ENCODE measurements at regions of chr5 and their contacts with region 1.

Region 1: GRCh38 chr5:134527146-134527960 is 1.9 kb downstream of the JADE2 start:
- DNase-seq: peak; percentile 73
- ATAC-seq: peak; percentile 49
- H3K4me3 Mint-ChIP-seq: peak overlapping the region; percentile 98
- H3K27ac Mint-ChIP-seq: peak overlapping the region; percentile 85
- H3K4me1 Mint-ChIP-seq: peaks cover 58% of the 10 kb centered on the region
- H3K27me3 Mint-ChIP-seq: no peaks in the 10 kb centered on the region
- CTCF ChIP-seq: no peak

Region 2: DNA sequence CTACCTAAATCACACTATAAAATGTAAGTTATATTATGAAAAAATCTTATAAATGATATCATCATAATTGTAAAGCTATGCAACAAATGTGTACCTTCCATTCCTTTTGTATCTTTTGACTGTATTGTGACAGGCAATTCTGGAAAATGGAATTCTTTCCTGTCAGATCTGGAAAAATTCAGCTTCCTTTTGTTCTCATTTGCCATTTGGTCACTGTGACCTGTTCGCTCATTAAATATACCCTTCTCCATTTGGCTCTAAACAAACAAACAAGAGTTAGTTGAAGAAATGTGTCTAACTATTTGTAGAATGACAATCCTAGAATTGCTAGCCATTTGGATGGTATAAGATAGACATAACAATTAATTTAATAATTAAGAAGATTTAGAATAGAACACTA is 223.0 kb before region 1 on chr5:
- CTCF ChIA-PET with region 1: no interaction called
- POLR2A ChIA-PET with region 1: no interaction called
- intact Hi-C with region 1: loop called (anchors 1 kb)
- DNase-seq: no peak
- ATAC-seq: no peak
- H3K4me3 Mint-ChIP-seq: no peak overlapping the region
- H3K27ac Mint-ChIP-seq: no peak overlapping the region
- H3K4me1 Mint-ChIP-seq: no peaks in the 10 kb centered on the region
- H3K27me3 Mint-ChIP-seq: no peaks in the 10 kb centered on the region
- CTCF ChIP-seq: no peak

Region 3: GRCh38 chr5:134446938-134447337 is 80.4 kb before region 1 on chr5:
- CTCF ChIA-PET with region 1: interaction called, 9 read pairs
- POLR2A ChIA-PET with region 1: interaction called, 10 read pairs
- intact Hi-C with region 1: loop called (anchors 2 kb)
- DNase-seq: peak; percentile 44
- ATAC-seq: peak; percentile 84
- H3K4me3 Mint-ChIP-seq: peak overlapping the region; percentile 13
- H3K27ac Mint-ChIP-seq: peak overlapping the region; percentile 76
- H3K4me1 Mint-ChIP-seq: peaks cover 53% of the 10 kb centered on the region
- H3K27me3 Mint-ChIP-seq: no peaks in the 10 kb centered on the region
- CTCF ChIP-seq: no peak

Region 4: GRCh38 chr5:134541736-134542376 is 14.5 kb after region 1 on chr5:
- CTCF ChIA-PET with region 1: interaction called, 21 read pairs
- POLR2A ChIA-PET with region 1: interaction called, 763 read pairs
- intact Hi-C with region 1: loop called (anchors 1 kb)
- DNase-seq: no peak
- ATAC-seq: no peak
- H3K4me3 Mint-ChIP-seq: peak overlapping the region; percentile 78
- H3K27ac Mint-ChIP-seq: peak overlapping the region; percentile 96
- H3K4me1 Mint-ChIP-seq: peaks cover 86% of the 10 kb centered on the region
- H3K27me3 Mint-ChIP-seq: no peaks in the 10 kb centered on the region
- CTCF ChIP-seq: no peak

Region 5: DNA sequence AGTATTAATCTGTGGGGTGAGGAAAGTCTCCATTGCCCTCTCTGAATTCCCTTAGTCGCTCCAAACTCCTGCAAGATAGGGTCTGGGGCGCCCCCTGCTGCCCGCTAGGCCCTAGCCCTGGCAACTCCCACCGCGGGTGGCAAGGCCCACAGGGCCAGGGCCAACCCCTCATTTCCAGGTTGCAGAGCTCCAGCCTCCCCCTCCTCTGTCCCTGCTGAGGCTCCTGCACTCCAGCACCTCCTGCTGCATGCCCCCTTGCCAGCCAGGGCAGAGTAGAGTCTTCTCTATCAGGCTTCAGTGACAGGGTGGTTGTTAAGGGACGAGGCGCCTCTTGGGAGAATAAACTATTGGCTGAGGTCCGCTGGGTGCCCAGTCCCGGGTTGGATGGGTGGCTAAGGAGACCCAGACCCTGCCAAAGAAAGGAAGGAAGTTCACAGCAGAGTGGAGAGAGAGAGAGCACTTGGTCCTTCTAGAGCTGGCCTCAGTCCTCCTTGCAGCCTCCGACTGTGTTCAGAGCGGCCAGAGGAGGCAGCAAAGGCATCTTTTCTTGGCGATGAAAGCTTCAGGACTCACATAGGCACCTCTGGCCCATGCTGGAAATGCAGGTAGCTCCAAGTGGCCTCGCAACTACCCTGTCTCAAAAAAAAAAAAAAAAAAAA is 59.6 kb after region 1 on chr5:
- CTCF ChIA-PET with region 1: interaction called, 5 read pairs
- POLR2A ChIA-PET with region 1: interaction called, 6 read pairs
- intact Hi-C with region 1: loop called (anchors 2 kb)
- DNase-seq: peak; percentile 79
- ATAC-seq: peak; percentile 91
- H3K4me3 Mint-ChIP-seq: peak overlapping the region; percentile 15
- H3K27ac Mint-ChIP-seq: no peak overlapping the region
- H3K4me1 Mint-ChIP-seq: peaks cover 18% of the 10 kb centered on the region
- H3K27me3 Mint-ChIP-seq: no peaks in the 10 kb centered on the region
- CTCF ChIP-seq: peak; percentile 20

Region 6: GRCh38 chr5:134609232-134609851 is 82.0 kb after region 1 on chr5:
- CTCF ChIA-PET with region 1: no interaction called
- POLR2A ChIA-PET with region 1: no interaction called
- intact Hi-C with region 1: no loop called
- DNase-seq: no peak
- ATAC-seq: no peak
- H3K4me3 Mint-ChIP-seq: no peak overlapping the region
- H3K27ac Mint-ChIP-seq: no peak overlapping the region
- H3K4me1 Mint-ChIP-seq: no peaks in the 10 kb centered on the region
- H3K27me3 Mint-ChIP-seq: no peaks in the 10 kb centered on the region
- CTCF ChIP-seq: no peak

Region 7: GRCh38 chr5:134724872-134725271 is 197.5 kb after region 1 on chr5:
- CTCF ChIA-PET with region 1: no interaction called
- POLR2A ChIA-PET with region 1: no interaction called
- intact Hi-C with region 1: no loop called
- DNase-seq: no peak
- ATAC-seq: no peak
- H3K4me3 Mint-ChIP-seq: no peak overlapping the region
- H3K27ac Mint-ChIP-seq: no peak overlapping the region
- H3K4me1 Mint-ChIP-seq: no peaks in the 10 kb centered on the region
- H3K27me3 Mint-ChIP-seq: no peaks in the 10 kb centered on the region
- CTCF ChIP-seq: no peak

Region 8: GRCh38 chr5:134738133-134738962 is 211.0 kb after region 1 on chr5 and contains the start of gene CAMLG:
- CTCF ChIA-PET with region 1: no interaction called
- POLR2A ChIA-PET with region 1: no interaction called
- intact Hi-C with region 1: loop called (anchors 5 kb)
- DNase-seq: peak; percentile 94
- ATAC-seq: peak; percentile 97
- H3K4me3 Mint-ChIP-seq: peak within 1 kb of the TSS; percentile 86
- H3K27ac Mint-ChIP-seq: peak within 1 kb of the TSS; percentile 93
- H3K4me1 Mint-ChIP-seq: peaks cover 33% of the 10 kb centered on the region
- H3K27me3 Mint-ChIP-seq: no peaks in the 10 kb centered on the region
- CTCF ChIP-seq: no peak
- total RNA-seq, gene CAMLG: 22.2 and 23.9 TPM in 2 replicates

Measured in activated B cell treated with CpG ODN at 0.5 μM for 24 hours (primary cell).